Ascending aorta (tissue), 2 donors: ENCODE measurements at regions of chr5 and their contacts with region 1.

Region 1: GRCh38 chr5:64207978-64208377 is 42.3 kb downstream of the RNF180 start:
- DNase-seq: no peak
- H3K4me3 ChIP-seq: no peak overlapping the region
- H3K27ac ChIP-seq: no peak overlapping the region
- H3K4me1 ChIP-seq: no peaks in the 10 kb centered on the region
- H3K27me3 ChIP-seq: no peaks in the 10 kb centered on the region
- CTCF ChIP-seq: peak in 2 of 3 experiments; percentile 21 to 50

Region 2: DNA sequence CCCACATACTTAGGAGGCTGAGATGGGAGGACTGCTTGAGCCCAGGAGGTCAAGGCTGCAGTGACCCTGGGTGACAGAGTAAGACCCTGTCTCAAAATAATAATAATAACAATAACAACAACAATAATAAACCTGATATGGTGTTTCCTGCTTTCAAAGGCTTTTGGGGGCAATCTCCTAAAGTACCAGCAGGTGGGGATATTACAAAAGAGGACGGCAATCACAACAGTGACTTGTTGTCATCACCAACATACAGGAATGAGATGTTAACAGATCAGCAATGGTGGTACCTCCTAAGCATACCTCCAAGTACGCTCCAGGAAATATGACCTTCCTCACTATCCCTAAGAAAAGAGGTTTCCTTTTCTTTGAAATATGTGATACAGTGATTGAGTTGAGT is 133.4 kb before region 1 on chr5:
- intact Hi-C with region 1: loop called (anchors 2 kb)
- DNase-seq: no peak
- H3K4me3 ChIP-seq: no peak overlapping the region
- H3K27ac ChIP-seq: no peak overlapping the region
- H3K4me1 ChIP-seq: no peaks in the 10 kb centered on the region
- H3K27me3 ChIP-seq: no peaks in the 10 kb centered on the region
- CTCF ChIP-seq: peak; percentile 19 to 65 (median 46)